Esophagus squamous epithelium (tissue), 5 donors: ENCODE measurements at regions of chr16 and their contacts with region 1.

Region 1: DNA sequence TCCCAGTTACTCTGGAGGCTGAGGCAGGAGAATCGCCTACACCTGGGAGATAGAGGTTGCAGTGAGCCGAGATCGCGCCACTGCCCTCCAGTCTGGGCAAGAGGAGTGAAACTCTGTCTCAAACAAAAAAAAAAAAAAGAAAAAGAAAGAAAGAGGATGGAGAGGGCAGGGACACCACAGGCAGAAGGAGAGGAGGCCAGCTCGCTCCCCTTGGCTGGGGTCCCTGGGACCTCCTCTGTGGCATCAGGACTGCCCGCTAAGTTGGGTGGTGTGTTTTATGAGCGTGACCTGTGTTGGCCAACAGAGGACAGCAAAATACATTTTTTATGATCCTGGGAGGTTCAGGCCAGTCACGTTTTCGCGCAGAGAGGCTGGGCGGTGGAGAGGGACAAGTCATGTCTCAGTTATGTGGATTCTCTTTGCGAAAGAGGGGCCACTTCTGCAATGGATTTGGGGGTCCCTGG is 229.6 kb downstream of the MRTFB start:
- DNase-seq: no peak
- H3K4me3 ChIP-seq: peak overlapping the region in 3 of 4 donors; percentile 82 to 98 (median 82)
- H3K27ac ChIP-seq: peak overlapping the region; percentile 81 to 93 (median 87)
- H3K4me1 ChIP-seq: peaks cover 8 to 47% (median 12%) of the 10 kb centered on the region in 3 donors
- H3K27me3 ChIP-seq: peaks cover 0 to 9% (median 0%) of the 10 kb centered on the region in 4 donors
- CTCF ChIP-seq: peak; percentile 51 to 74 (median 60)
- POLR2A ChIP-seq: no peak

Region 2: DNA sequence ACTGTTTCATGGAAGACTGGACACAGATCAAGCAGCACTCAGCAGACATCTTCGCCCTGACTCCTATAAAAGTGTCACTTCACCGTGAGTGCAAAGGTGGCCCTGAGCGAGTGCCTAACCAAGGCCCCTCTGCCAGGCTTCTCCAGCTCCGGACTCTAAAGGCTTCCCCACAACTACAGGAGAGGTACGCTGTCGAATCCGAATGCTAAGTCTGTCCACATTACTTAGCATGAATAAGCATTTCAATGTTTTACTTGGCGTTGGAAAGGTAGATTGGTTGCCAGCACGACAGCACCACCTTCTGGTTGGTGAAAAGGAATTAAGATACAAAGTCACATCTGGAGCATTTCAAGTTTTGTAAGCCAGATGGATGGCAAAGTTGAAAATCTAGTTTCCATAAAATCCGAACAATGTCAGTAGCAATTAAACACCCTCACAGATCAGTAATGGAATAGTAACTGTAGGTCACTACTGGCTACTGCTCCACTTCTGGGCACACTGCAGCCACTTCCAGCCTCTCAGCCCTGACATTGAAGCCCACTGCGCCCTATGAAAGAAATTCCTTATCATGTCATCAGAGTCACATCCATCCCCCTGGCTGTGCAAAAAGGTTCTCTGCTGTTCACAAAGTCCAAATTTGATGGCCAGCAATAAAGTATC is 228.4 kb after region 1 on chr16:
- intact Hi-C with region 1: loop called (anchors 5 kb)
- DNase-seq: no peak
- H3K4me3 ChIP-seq: peak overlapping the region in 2 of 4 donors; percentile 13 to 53
- H3K27ac ChIP-seq: peak overlapping the region in 2 of 4 donors; percentile 49 to 51
- H3K4me1 ChIP-seq: peaks cover 8 to 34% (median 23%) of the 10 kb centered on the region in 3 donors
- H3K27me3 ChIP-seq: no peaks in the 10 kb centered on the region
- CTCF ChIP-seq: peak in 5 of 6 experiments; percentile 73 to 88 (median 84)
- POLR2A ChIP-seq: no peak